T-cell (primary cell): ENCODE measurements at regions of chr6 and their contacts with region 1.

Region 1: DNA sequence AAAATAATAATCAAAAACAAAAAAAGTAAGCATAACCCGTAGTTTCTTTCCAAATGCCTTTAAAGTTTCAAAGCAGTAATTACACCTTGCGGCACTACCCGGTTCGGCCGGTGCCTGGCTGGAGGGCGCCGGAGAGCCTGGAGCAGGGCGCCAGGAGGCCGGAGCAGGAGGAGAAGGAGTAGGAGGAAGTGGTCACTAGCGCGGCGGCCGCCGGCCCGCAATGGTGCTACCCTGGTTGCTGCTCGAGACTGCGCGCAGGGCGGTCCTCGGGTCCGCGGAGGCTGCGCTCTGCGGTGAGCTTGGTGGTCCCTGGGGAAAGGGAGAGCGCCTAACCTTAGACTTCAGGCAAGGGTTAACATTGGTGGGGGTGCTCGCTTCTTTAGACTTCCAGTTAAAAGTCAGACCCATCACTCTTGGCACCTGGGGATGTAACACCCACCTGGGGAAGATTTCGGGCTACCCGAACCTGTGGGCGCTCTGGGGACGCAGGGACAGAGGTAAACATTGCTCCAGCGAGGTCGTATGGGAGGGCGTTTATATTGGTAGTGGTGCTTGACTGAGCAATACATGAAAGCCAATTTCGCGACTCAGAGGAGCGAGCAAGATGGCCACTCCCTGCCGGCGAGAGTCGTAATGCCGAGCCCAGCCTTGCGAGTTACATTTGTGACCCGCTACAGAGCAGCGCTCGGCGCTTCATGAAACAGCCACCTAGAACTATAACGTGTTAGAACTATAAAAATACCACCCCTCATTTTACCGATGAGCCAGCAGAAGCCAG is 5.8 kb upstream of the USP45 start:
- DNase-seq: peak; percentile 40 to 78 (median 62)
- ATAC-seq: peak; percentile 90 to 94 (median 90)
- H3K4me3 ChIP-seq: peak overlapping the region; percentile 88 to 92
- H3K4me3 Mint-ChIP-seq: peak overlapping the region; percentile 89 to 97 (median 93)
- H3K27ac ChIP-seq: peak overlapping the region; percentile 66
- H3K27ac Mint-ChIP-seq: peak overlapping the region; percentile 84 to 93
- H3K4me1 ChIP-seq: peaks cover 7 to 12% of the 10 kb centered on the region in 2 experiments
- H3K4me1 Mint-ChIP-seq: peaks cover 26 to 40% (median 32%) of the 10 kb centered on the region in 3 donors
- H3K27me3 ChIP-seq: no peaks in the 10 kb centered on the region
- H3K27me3 Mint-ChIP-seq: no peaks in the 10 kb centered on the region

Region 2: DNA sequence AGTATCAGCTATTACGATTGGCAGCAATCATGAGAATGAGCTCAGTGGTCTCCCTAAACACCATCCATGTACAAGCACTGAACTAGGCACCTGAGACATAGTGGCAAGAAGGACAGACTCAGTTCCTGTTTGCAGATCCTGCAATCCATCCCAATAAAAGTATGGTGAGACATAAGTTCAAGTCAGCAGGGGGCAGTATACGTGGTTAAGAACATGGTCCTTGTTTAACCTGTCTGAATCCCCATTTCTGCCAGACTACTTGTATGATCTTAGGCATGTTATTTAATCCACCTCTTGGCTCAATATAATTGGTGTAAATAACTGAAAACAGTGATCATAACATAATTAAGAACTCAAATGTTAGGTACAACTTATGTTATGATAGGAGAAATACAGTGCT is 62.7 kb before region 1 on chr6:
- CTCF ChIA-PET with region 1: interaction called in 1 of 2 experiments, 3 read pairs
- POLR2A ChIA-PET with region 1: interaction called, 3 to 10 read pairs
- DNase-seq: peak in 1 of 35 experiments; percentile 28
- ATAC-seq: no peak
- H3K4me3 ChIP-seq: no peak overlapping the region
- H3K4me3 Mint-ChIP-seq: no peak overlapping the region
- H3K27ac ChIP-seq: no peak overlapping the region
- H3K27ac Mint-ChIP-seq: peak overlapping the region in 1 of 2 donors; percentile 7
- H3K4me1 ChIP-seq: no peaks in the 10 kb centered on the region
- H3K4me1 Mint-ChIP-seq: no peaks in the 10 kb centered on the region
- H3K27me3 ChIP-seq: no peaks in the 10 kb centered on the region
- H3K27me3 Mint-ChIP-seq: no peaks in the 10 kb centered on the region

Region 3: GRCh38 chr6:99545442-99545841 is 24.4 kb after region 1 on chr6:
- CTCF ChIA-PET with region 1: interaction called in 1 of 2 experiments, 3 read pairs
- POLR2A ChIA-PET with region 1: interaction called in 1 of 2 experiments, 11 read pairs
- DNase-seq: no peak
- ATAC-seq: no peak
- H3K4me3 ChIP-seq: no peak overlapping the region
- H3K4me3 Mint-ChIP-seq: no peak overlapping the region
- H3K27ac ChIP-seq: no peak overlapping the region
- H3K27ac Mint-ChIP-seq: peak overlapping the region in 1 of 2 donors; percentile 25
- H3K4me1 ChIP-seq: no peaks in the 10 kb centered on the region
- H3K4me1 Mint-ChIP-seq: peaks cover 2 to 9% (median 7%) of the 10 kb centered on the region in 3 donors
- H3K27me3 ChIP-seq: no peaks in the 10 kb centered on the region
- H3K27me3 Mint-ChIP-seq: no peaks in the 10 kb centered on the region

Region 4: DNA sequence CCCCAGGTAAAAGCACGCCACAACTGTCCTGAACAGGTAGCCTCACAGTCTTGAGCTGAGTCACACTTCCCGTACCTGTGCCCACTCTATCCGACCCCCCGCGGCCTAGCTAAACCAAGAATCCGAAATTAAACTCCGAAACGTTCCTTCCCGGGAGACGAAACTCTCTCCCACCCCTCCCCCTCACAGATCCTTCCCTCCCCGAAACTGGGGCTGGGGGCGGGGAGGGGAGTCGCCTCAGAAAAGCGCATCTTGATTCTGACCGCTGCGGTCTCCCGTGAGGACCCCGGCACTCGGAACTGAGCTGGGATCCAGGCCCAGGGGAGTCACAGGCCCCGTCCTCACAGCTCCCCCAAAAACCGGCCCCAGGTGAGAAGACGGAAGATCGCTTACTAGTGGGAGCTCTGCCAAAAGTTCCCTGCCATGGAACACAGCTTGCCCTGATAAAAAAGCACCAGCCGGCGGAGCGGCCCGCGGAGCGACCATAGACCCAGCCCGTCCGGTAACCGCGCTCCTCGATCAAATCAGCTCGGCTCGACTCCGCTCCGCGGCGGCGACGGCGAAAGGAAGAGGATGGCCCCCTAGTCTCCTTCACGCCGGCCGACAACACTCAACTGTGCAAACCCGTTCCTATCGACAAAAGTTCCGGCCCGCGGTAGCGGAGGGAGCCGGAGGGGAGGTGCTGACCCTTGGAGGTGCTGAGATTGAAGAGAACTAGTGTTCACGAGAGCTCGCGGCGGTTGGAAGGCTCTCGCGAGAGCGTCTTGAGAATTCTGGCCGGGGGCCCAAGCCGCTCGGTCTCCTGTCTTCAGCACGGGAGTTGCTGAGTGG is 47.3 kb after region 1 on chr6 and contains the start of gene CCNC:
- CTCF ChIA-PET with region 1: interaction called in 1 of 2 experiments, 10 read pairs
- POLR2A ChIA-PET with region 1: interaction called, 3 to 8 read pairs
- DNase-seq: peak; percentile 80 to 91 (median 85)
- ATAC-seq: peak; percentile 94 to 98 (median 96)
- H3K4me3 ChIP-seq: peak within 1 kb of the TSS; percentile 65 to 77
- H3K4me3 Mint-ChIP-seq: peak within 1 kb of the TSS; percentile 93 to 100 (median 100)
- H3K27ac ChIP-seq: peak within 1 kb of the TSS; percentile 38
- H3K27ac Mint-ChIP-seq: peak within 1 kb of the TSS; percentile 95 to 97
- H3K4me1 ChIP-seq: peaks cover 5 to 6% of the 10 kb centered on the region in 2 experiments
- H3K4me1 Mint-ChIP-seq: peaks cover 33 to 45% (median 40%) of the 10 kb centered on the region in 3 donors
- H3K27me3 ChIP-seq: no peaks in the 10 kb centered on the region
- H3K27me3 Mint-ChIP-seq: no peaks in the 10 kb centered on the region
- total RNA-seq, gene CCNC: 33.9 to 42.0 (median 39.1) TPM

Region 5: DNA sequence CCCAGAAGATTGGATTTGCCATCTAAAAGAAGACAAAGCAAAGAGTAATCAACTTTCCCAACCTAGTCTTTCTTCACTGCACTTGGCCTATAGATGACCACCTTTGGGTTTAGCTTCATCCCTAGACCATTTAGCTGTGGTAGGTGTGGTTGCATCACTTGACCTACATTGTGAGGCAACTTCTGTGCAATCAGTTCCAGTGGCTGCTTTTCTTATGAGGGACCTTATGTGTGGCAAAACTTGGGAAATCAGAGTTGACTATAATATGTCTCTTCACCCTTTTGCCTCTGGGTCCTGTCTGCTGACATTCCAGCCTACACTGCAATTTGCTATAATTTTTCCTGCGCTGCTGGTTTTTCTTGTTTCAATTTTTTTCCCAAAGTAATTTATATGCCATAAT is 140.8 kb after region 1 on chr6:
- CTCF ChIA-PET with region 1: no interaction called
- POLR2A ChIA-PET with region 1: no interaction called
- DNase-seq: no peak
- ATAC-seq: no peak
- H3K4me3 ChIP-seq: no peak overlapping the region
- H3K4me3 Mint-ChIP-seq: no peak overlapping the region
- H3K27ac ChIP-seq: no peak overlapping the region
- H3K27ac Mint-ChIP-seq: no peak overlapping the region
- H3K4me1 ChIP-seq: no peaks in the 10 kb centered on the region
- H3K4me1 Mint-ChIP-seq: no peaks in the 10 kb centered on the region
- H3K27me3 ChIP-seq: peaks cover 0 to 3% of the 10 kb centered on the region in 2 experiments
- H3K27me3 Mint-ChIP-seq: peaks cover 8 to 15% of the 10 kb centered on the region in 2 donors